Activated CD4-positive, alpha-beta memory T cell treated with anti-CD3 and anti-CD28 coated beads, Interleukin-2, amount 10 ng/mL, durations not matched to agents 7 days and 5 days (primary cell): ENCODE measurements at regions of chr2 and their contacts with region 1.

Region 1: DNA sequence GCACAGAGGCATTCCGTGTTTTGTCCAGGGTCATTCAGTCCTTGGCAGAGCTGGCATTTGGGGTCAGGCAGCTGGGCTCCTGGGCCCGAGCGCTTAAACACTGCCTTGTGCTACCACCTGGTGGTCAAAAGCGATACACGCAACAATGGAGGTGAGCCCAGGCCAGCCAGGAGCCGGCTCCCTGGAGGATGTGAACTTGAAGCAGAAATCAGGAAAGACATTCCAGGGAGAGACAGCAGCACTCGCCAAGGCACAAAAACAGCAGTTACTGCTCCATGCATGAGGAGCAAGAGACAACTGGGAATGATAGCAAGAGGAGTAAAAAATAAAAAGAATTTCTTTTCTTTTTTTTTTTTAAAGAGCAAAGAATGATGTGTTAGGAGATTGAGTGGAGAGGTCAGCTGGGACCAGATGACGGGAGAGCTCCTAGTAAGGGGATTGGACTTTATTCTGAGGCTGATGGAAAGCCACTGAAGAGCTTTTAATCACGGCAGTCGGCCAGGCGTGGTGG is 20.7 kb downstream of the SCYGR8 start:
- DNase-seq: peak; percentile 58
- H3K4me3 Mint-ChIP-seq: no peak overlapping the region
- H3K27ac Mint-ChIP-seq: no peak overlapping the region
- H3K4me1 Mint-ChIP-seq: no peaks in the 10 kb centered on the region
- H3K27me3 Mint-ChIP-seq: peaks cover 2% of the 10 kb centered on the region

Region 2: DNA sequence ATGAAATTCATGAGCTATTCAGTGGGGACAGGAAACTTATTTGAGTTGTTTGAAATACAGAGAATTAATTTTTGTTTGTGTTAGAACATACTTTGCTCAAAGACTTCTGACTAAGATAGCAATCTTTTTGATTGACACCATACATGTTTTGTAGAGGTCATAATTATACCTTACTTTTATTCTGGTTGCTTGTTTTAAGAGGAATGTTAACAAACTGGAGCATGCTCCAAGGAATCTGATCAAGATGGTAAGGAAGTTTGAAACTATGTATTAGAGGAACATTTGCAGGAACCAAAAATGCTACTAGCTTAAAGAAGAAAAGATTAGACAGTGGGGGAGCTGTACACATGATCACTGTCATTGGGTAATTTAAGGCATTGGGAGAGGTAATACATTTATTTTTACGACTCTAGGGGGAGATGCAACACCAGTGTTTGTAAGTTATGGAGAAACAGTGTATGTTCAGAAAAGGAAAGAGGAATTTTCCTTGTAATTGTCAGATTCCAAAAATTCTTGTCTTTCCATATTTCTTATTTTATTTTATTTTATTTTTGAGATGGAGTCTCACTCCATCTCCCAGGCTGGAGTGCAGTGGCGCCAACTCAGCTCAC is 286.5 kb before region 1 on chr2:
- CTCF ChIA-PET with region 1: interaction called, 15 read pairs
- POLR2A ChIA-PET with region 1: no interaction called
- DNase-seq: no peak
- H3K4me3 Mint-ChIP-seq: no peak overlapping the region
- H3K27ac Mint-ChIP-seq: no peak overlapping the region
- H3K4me1 Mint-ChIP-seq: peaks cover 49% of the 10 kb centered on the region
- H3K27me3 Mint-ChIP-seq: no peaks in the 10 kb centered on the region

Region 3: DNA sequence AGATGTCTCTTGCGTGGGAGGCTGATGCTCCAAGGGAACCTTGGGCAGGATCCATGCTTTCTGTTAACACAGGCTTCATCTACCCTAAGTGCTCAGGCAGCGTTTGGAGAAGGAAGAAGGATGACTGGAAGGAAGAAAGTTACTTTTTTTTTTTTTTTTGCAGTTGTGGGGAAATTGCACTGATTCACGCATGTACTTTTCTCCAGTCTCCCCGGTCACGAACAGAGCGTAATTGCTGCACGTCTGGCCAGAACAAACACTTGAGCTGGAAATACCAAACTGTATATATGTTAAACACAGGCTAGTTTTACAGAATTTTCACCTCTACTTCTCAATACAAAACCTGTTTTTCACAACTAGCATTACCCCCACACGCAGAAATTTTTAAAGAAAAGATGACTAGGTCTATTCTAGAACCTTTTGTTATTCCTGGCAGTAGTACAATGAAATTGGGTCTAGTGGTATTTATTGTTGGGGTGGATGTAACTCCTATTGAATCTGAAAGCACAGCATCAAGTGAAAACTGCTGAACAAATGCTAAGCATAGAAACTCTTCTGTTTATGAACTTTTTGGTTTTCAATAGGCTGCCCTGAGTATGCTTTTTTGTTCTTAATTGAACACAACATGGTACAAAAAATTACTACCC is 109.1 kb before region 1 on chr2:
- CTCF ChIA-PET with region 1: interaction called, 43 read pairs
- POLR2A ChIA-PET with region 1: no interaction called
- DNase-seq: no peak
- H3K4me3 Mint-ChIP-seq: no peak overlapping the region
- H3K27ac Mint-ChIP-seq: no peak overlapping the region
- H3K4me1 Mint-ChIP-seq: no peaks in the 10 kb centered on the region
- H3K27me3 Mint-ChIP-seq: peaks cover 6% of the 10 kb centered on the region

Region 4: GRCh38 chr2:227862227-227862740 is 95.9 kb after region 1 on chr2:
- CTCF ChIA-PET with region 1: interaction called, 21 read pairs
- POLR2A ChIA-PET with region 1: no interaction called
- DNase-seq: peak; percentile 25
- H3K4me3 Mint-ChIP-seq: no peak overlapping the region
- H3K27ac Mint-ChIP-seq: no peak overlapping the region
- H3K4me1 Mint-ChIP-seq: no peaks in the 10 kb centered on the region
- H3K27me3 Mint-ChIP-seq: no peaks in the 10 kb centered on the region